Posterior cingulate gyrus (tissue), 11 donors: ENCODE measurements at regions of chr6 and their contacts with region 1.

Region 1: GRCh38 chr6:168956884-168957730 is 296.5 kb downstream of the THBS2 start:
- DNase-seq: peak; percentile 36 to 97 (median 76)

Region 2: DNA sequence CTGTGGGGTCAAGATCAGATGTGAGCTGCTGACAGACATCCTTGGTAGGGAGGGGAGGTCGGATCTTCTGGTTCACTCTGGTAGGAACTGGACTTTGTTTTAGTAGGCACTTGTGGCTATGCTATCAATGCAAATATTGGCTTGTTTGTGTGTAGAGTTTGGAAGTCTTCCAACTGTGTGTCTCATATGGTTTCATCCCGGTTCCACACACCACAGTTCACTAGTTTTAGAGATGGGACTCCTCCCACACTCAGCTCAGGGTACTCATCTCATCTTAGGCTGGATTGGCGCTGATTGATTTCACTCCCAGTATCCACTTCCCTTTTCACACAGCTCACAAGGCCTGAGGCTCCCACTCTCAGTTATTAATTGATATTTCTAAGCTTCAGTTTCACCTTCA is 135.3 kb after region 1 on chr6:
- intact Hi-C with region 1: no loop called
- DNase-seq: no peak

Region 3: GRCh38 chr6:169326067-169326799 is 369.1 kb after region 1 on chr6:
- intact Hi-C with region 1: loop called (anchors 1 kb)
- DNase-seq: peak in 7 of 10 donors; percentile 38 to 92 (median 61)

Region 4: GRCh38 chr6:169487579-169488436 is 530.7 kb after region 1 on chr6:
- intact Hi-C with region 1: loop called (anchors 2 kb)
- DNase-seq: peak in 2 of 10 donors; percentile 27 to 65